ENCODE measurements at regions of chr11 and their contacts with region 1.

Region 1: DNA sequence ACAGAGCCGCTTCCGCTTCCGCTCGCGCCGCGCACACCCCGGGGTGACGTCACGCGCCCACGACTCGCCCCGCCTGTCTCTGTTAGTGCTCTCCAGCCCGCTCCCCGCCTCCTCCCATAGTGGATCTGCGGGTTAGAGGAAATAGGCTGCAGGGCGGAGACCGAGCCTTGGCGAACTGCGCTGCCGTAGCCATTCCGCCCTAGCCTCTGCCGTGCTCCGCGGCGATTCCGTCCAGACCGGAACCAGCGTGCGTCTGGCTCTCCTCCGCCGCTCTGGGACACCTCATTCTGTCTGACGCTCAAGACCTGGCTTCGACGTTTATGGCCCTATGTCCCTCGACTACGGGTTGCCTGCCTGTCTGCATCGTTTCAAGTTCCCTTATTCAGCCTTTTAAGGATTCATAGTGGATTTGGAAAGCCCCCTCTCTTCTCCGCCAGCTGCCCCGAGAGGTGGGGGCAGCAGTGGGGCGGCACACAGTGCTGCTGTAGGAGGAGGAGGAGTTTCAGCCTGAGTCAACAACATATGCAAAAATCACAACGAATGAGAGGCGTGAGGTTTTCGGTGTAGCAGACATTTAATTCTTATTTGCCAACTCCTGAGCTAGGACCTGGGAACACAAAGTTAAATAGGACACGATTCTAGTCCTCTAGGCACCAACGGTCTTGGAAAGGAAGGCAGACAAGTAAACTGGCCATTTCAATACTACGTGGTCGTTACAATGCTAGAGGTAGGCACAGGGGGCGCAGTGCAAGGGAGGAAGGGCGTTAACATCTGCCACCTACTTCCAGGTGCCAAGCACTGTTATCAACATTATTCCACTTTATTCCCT is at the start of gene TAF10:
- DNase-seq: peak; percentile 89 to 97 (median 95)
- ATAC-seq: peak; percentile 94
- H3K4me3 ChIP-seq: peak within 1 kb of the TSS; percentile 83
- H3K4me3 Mint-ChIP-seq: peak within 1 kb of the TSS in 6 of 10 donors; percentile 84 to 94 (median 92)
- H3K27ac ChIP-seq: peak within 1 kb of the TSS; percentile 91
- H3K27ac Mint-ChIP-seq: peak within 1 kb of the TSS in 5 of 9 donors; percentile 90 to 98 (median 96)
- H3K4me1 ChIP-seq: peaks cover 25% of the 10 kb centered on the region in 2 donors
- H3K4me1 Mint-ChIP-seq: peaks cover 9 to 46% (median 33%) of the 10 kb centered on the region in 7 donors
- H3K27me3 ChIP-seq: no peaks in the 10 kb centered on the region
- H3K27me3 Mint-ChIP-seq: no peaks in the 10 kb centered on the region
- total RNA-seq, gene TAF10: 116 to 135 (median 128) TPM

Region 2: GRCh38 chr11:6544921-6545850 is 67.2 kb before region 1 on chr11:
- CTCF ChIA-PET with region 1: no interaction called
- POLR2A ChIA-PET with region 1: no interaction called
- intact Hi-C with region 1: no loop called
- DNase-seq: no peak
- ATAC-seq: no peak
- H3K4me3 ChIP-seq: no peak overlapping the region
- H3K4me3 Mint-ChIP-seq: no peak overlapping the region
- H3K27ac ChIP-seq: no peak overlapping the region
- H3K27ac Mint-ChIP-seq: no peak overlapping the region
- H3K4me1 ChIP-seq: no peaks in the 10 kb centered on the region
- H3K4me1 Mint-ChIP-seq: peaks cover 0 to 19% (median 5%) of the 10 kb centered on the region in 7 donors
- H3K27me3 ChIP-seq: no peaks in the 10 kb centered on the region
- H3K27me3 Mint-ChIP-seq: no peaks in the 10 kb centered on the region

Region 3: GRCh38 chr11:6627762-6628241 is 15.4 kb after region 1 on chr11:
- CTCF ChIA-PET with region 1: interaction called, 4 read pairs
- POLR2A ChIA-PET with region 1: interaction called, 20 read pairs
- intact Hi-C with region 1: no loop called
- DNase-seq: peak in 5 of 9 donors; percentile 18 to 43 (median 32)
- ATAC-seq: peak; percentile 76
- H3K4me3 ChIP-seq: peak overlapping the region; percentile 32
- H3K4me3 Mint-ChIP-seq: peak overlapping the region; percentile 8 to 75 (median 50)
- H3K27ac ChIP-seq: peak overlapping the region; percentile 55
- H3K27ac Mint-ChIP-seq: peak overlapping the region; percentile 10 to 89 (median 63)
- H3K4me1 ChIP-seq: peaks cover 8% of the 10 kb centered on the region in 2 donors
- H3K4me1 Mint-ChIP-seq: peaks cover 11 to 29% (median 19%) of the 10 kb centered on the region in 7 donors
- H3K27me3 ChIP-seq: no peaks in the 10 kb centered on the region
- H3K27me3 Mint-ChIP-seq: no peaks in the 10 kb centered on the region

Region 4: DNA sequence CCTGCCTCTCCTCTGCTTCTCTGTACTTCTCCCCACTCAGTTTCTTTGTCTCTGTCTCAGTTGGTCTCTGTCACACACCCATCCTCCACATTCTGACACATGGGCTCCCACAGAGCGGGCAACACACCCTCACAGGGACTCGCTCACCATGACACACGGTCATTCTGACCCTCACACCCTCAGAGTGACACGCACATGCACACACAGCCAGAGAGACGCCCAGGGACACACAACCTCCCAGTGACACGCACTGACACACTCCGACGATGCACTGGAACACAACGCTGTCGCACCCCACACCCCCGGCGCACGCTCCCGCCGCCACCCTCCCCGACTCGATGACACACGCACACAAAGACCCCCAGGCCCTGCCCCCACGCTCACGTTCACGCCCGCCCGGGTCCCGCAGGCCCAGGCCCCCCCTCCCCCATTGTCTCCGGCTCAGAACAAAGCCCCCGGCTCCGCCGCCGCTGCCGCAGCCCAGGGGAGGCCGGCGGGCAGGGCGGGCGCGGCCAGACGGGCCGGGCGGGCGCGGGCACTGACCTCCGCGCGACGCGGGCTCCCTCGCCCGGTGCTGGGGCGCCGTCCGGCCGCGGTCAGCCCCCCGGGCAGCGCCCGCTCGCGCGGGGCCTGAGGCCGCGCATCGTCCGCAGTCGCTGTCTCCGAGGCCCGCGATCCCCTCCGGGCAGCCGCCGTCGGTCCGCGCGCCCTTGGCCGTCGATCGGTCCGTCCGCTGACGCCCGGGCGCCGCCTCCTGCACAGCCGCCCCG is 42.8 kb after region 1 on chr11:
- CTCF ChIA-PET with region 1: no interaction called
- POLR2A ChIA-PET with region 1: interaction called, 57 read pairs
- intact Hi-C with region 1: loop called (anchors 1 to 5 kb)
- DNase-seq: peak in 7 of 9 donors; percentile 15 to 50 (median 34)
- ATAC-seq: peak; percentile 60
- H3K4me3 ChIP-seq: peak overlapping the region; percentile 52
- H3K4me3 Mint-ChIP-seq: no peak overlapping the region
- H3K27ac ChIP-seq: peak overlapping the region; percentile 66
- H3K27ac Mint-ChIP-seq: no peak overlapping the region
- H3K4me1 ChIP-seq: peaks cover 0 to 26% of the 10 kb centered on the region in 2 donors
- H3K4me1 Mint-ChIP-seq: peaks cover 5 to 11% (median 7%) of the 10 kb centered on the region in 7 donors
- H3K27me3 ChIP-seq: no peaks in the 10 kb centered on the region
- H3K27me3 Mint-ChIP-seq: peaks cover 0 to 16% (median 0%) of the 10 kb centered on the region in 5 donors

Region 5: GRCh38 chr11:6674862-6675261 is 62.4 kb after region 1 on chr11:
- CTCF ChIA-PET with region 1: interaction called, 7 read pairs
- POLR2A ChIA-PET with region 1: interaction called, 170 read pairs
- intact Hi-C with region 1: no loop called
- DNase-seq: no peak
- ATAC-seq: no peak
- H3K4me3 ChIP-seq: no peak overlapping the region
- H3K4me3 Mint-ChIP-seq: peak overlapping the region in 4 of 10 donors; percentile 18 to 85 (median 42)
- H3K27ac ChIP-seq: no peak overlapping the region
- H3K27ac Mint-ChIP-seq: peak overlapping the region in 1 of 9 donors; percentile 9
- H3K4me1 ChIP-seq: peaks cover 16 to 50% of the 10 kb centered on the region in 2 donors
- H3K4me1 Mint-ChIP-seq: peaks cover 44 to 77% (median 65%) of the 10 kb centered on the region in 7 donors
- H3K27me3 ChIP-seq: no peaks in the 10 kb centered on the region
- H3K27me3 Mint-ChIP-seq: no peaks in the 10 kb centered on the region

Region 6: GRCh38 chr11:6746086-6746618 is 133.7 kb after region 1 on chr11:
- CTCF ChIA-PET with region 1: no interaction called
- POLR2A ChIA-PET with region 1: interaction called, 21 read pairs
- intact Hi-C with region 1: loop called in 1 of 2 experiments (anchors 2 kb)
- DNase-seq: peak in 8 of 9 donors; percentile 32 to 66 (median 64)
- ATAC-seq: peak; percentile 89
- H3K4me3 ChIP-seq: peak overlapping the region; percentile 80
- H3K4me3 Mint-ChIP-seq: no peak overlapping the region
- H3K27ac ChIP-seq: peak overlapping the region; percentile 85
- H3K27ac Mint-ChIP-seq: no peak overlapping the region
- H3K4me1 ChIP-seq: peaks cover 18 to 37% of the 10 kb centered on the region in 2 donors
- H3K4me1 Mint-ChIP-seq: peaks cover 26 to 48% (median 29%) of the 10 kb centered on the region in 7 donors
- H3K27me3 ChIP-seq: no peaks in the 10 kb centered on the region
- H3K27me3 Mint-ChIP-seq: no peaks in the 10 kb centered on the region